Calu3 (cell line): ENCODE measurements at regions of chr17 and their contacts with region 1.

Region 1: DNA sequence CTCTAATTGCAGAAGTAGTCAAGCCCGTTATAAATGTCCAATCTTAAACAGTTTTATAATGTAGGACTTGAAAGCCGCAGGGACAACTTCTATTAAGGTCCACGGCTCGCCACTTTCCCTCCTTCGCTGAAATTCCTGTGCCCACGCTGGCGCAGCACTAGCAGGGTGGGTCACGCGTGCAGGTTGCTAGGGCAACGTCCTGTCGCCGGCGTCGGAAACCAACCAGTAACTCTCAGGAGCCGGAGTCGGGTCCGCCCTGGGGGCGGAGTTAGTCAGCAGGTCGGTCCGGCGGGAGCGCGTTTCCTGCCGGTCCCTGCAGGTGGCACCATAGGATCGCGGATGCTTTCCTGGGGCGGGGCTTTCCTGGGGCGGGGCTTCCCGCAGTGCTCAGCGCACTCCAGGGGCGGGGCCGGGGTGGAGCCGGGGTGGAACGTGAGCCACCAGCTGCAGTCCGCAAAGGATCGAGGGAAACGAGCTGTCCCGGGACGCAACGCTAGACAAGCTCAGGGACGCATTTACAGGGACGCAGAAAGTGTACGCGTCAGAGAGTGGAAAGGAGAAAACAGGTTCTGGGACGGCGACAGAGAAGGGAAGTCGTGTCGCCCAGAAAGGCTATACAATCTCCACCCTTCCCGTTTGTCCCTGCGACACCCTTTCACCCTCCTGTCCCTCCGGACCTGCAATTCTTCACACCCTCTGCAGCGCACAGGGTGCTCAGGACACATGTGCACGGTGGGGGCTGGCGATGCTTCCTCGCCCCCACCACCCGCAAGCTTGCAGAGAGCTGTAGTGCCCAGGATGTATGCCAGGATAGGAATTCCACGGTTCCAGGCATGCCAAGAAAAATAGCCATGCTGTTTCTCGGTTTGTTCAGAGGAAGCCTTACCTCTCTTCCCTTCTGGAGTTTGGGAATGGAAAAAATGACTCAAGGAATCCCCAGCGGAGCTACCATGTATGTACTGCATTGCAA is 12.4 kb downstream of the COPZ2 start:
- DNase-seq: peak; percentile 99
- H3K4me3 Mint-ChIP-seq: peak overlapping the region; percentile 76
- H3K27ac Mint-ChIP-seq: peak overlapping the region; percentile 90
- H3K4me1 Mint-ChIP-seq: peaks cover 49% of the 10 kb centered on the region
- H3K27me3 Mint-ChIP-seq: peaks cover 18% of the 10 kb centered on the region
- CTCF ChIP-seq: peak; percentile 92

Region 2: GRCh38 chr17:48047741-48048383 is 22.6 kb after region 1 on chr17 and contains the start of gene NFE2L1:
- CTCF ChIA-PET with region 1: interaction called, 19 read pairs
- intact Hi-C with region 1: no loop called
- DNase-seq: peak; percentile 100
- H3K4me3 Mint-ChIP-seq: peak within 1 kb of the TSS; percentile 94
- H3K27ac Mint-ChIP-seq: peak within 1 kb of the TSS; percentile 88
- H3K4me1 Mint-ChIP-seq: peaks cover 53% of the 10 kb centered on the region
- H3K27me3 Mint-ChIP-seq: no peaks in the 10 kb centered on the region
- CTCF ChIP-seq: no peak
- total RNA-seq, gene NFE2L1: 216 and 247 TPM in 2 replicates

Region 3: GRCh38 chr17:48074315-48075081 is 49.3 kb after region 1 on chr17:
- CTCF ChIA-PET with region 1: interaction called, 25 read pairs
- intact Hi-C with region 1: loop called (anchors 1 kb)
- DNase-seq: peak; percentile 87
- H3K4me3 Mint-ChIP-seq: no peak overlapping the region
- H3K27ac Mint-ChIP-seq: peak overlapping the region; percentile 21
- H3K4me1 Mint-ChIP-seq: no peaks in the 10 kb centered on the region
- H3K27me3 Mint-ChIP-seq: no peaks in the 10 kb centered on the region
- CTCF ChIP-seq: peak; percentile 83

Region 4: DNA sequence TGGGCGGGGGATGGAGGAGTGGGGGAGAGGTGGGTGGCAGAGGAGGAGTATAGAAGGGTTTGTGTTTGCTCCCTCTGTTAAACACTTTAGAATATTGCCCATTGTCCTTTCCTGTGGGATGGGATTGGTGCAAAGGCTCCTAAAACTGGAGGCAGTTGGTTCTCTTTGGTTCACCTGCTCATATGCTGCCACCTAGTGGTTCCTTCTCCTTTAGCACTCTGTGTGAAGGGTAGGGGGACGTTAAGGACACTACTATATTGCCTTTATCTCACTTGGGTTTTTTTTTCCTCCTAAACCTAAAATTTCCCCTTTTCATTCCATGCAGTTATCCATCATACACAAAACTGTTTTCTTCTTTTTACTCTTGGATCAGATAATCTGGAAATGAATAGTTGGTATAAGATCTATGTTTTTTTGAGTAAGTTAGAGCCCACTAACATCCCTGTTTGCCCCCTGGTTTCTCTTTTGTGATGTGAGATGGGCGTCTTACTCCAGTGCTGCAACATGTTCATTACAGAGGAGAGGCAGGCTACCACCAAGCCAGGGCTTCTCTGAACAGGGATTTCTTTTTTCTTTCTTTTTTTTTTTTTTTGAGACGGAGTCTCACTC is 106.1 kb after region 1 on chr17:
- CTCF ChIA-PET with region 1: interaction called, 30 read pairs
- intact Hi-C with region 1: loop called (anchors 1 kb)
- DNase-seq: peak; percentile 85
- H3K4me3 Mint-ChIP-seq: no peak overlapping the region
- H3K27ac Mint-ChIP-seq: no peak overlapping the region
- H3K4me1 Mint-ChIP-seq: peaks cover 15% of the 10 kb centered on the region
- H3K27me3 Mint-ChIP-seq: no peaks in the 10 kb centered on the region
- CTCF ChIP-seq: peak; percentile 92

Region 5: GRCh38 chr17:48618256-48618897 is 593.2 kb after region 1 on chr17:
- CTCF ChIA-PET with region 1: interaction called, 4 read pairs
- intact Hi-C with region 1: loop called (anchors 2 kb)
- DNase-seq: peak; percentile 98
- H3K4me3 Mint-ChIP-seq: peak overlapping the region; percentile 88
- H3K27ac Mint-ChIP-seq: peak overlapping the region; percentile 74
- H3K4me1 Mint-ChIP-seq: peaks cover 71% of the 10 kb centered on the region
- H3K27me3 Mint-ChIP-seq: peaks cover 88% of the 10 kb centered on the region
- CTCF ChIP-seq: peak; percentile 100